ENCODE measurements at regions of chr13 and their contacts with region 1.

Region 1: GRCh38 chr13:24727731-24728601 is 36.0 kb upstream of the RNF17 start:
- DNase-seq: peak in 1 of 2 donors; percentile 49
- ATAC-seq: peak; percentile 89 to 96 (median 94)
- H3K4me3 ChIP-seq: no peak overlapping the region
- H3K27ac ChIP-seq: no peak overlapping the region
- H3K4me1 ChIP-seq: peaks cover 0 to 3% (median 0%) of the 10 kb centered on the region in 9 donors
- H3K27me3 ChIP-seq: peaks cover 0 to 10% (median 0%) of the 10 kb centered on the region in 7 donors
- CTCF ChIP-seq: peak; percentile 44 to 87 (median 76)

Region 2: GRCh38 chr13:24491845-24492244 is 236.1 kb before region 1 on chr13:
- intact Hi-C with region 1: no loop called
- DNase-seq: no peak
- ATAC-seq: peak in 2 of 8 donors; percentile 19 to 24
- H3K4me3 ChIP-seq: no peak overlapping the region
- H3K27ac ChIP-seq: no peak overlapping the region
- H3K4me1 ChIP-seq: peaks cover 0 to 1% (median 0%) of the 10 kb centered on the region in 9 donors
- H3K27me3 ChIP-seq: no peaks in the 10 kb centered on the region
- CTCF ChIP-seq: no peak

Region 3: DNA sequence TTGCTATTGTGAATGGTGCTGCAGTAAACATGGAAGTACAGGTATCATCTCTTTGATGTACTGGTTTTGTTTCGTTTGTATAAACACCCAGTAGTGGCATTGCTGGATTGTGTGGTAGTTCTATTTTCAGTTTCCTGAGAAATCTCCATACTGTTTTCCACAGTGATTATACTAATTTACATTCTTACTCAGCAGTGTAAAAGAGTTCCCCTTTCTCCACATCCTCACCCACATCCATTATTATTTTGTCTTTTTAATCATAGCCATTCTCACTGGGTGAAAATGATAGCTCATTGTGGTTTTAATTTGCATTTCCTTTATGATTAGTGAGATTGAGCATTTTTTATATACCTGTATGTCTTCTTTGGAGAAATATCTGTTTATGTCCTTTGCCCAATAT is 153.1 kb before region 1 on chr13:
- intact Hi-C with region 1: loop called in 2 of 10 experiments (anchors 5 kb)
- DNase-seq: no peak
- ATAC-seq: no peak
- H3K4me3 ChIP-seq: no peak overlapping the region
- H3K27ac ChIP-seq: no peak overlapping the region
- H3K4me1 ChIP-seq: no peaks in the 10 kb centered on the region
- H3K27me3 ChIP-seq: peaks cover 0 to 7% (median 0%) of the 10 kb centered on the region in 7 donors
- CTCF ChIP-seq: no peak

Region 4: DNA sequence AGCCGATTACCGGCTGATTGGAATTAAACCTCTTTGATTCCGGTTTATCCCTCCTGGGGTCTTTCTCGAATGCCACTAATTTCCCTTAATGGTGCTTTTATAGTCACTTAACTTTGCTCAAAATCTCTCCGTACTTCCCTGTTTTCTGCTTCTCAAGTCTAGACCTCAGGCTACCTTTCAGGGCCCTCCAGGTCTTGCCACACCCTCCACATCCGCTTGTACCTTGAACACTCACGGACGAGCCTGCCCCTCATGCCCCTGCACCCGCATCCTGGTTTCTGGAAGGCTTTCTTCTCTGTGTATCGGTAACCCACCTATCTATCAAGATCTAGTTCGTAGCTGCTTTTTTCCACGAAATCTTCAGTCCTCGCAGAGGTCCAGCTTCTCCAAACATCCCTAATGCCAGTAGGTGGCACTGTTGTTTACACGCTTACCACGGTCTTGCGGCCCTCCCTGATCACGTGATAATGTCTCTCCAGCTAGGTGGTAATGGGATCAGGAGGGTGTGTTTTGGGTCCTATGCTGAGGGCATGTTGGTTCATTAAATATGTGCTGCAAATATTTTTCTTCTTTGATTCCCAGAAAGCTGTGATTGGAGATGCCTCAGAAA is 34.0 kb before region 1 on chr13:
- intact Hi-C with region 1: loop called in 7 of 10 experiments (anchors 2 to 10 kb)
- DNase-seq: peak in 1 of 2 donors; percentile 38
- ATAC-seq: peak in 6 of 8 donors; percentile 68 to 78 (median 73)
- H3K4me3 ChIP-seq: no peak overlapping the region
- H3K27ac ChIP-seq: no peak overlapping the region
- H3K4me1 ChIP-seq: no peaks in the 10 kb centered on the region
- H3K27me3 ChIP-seq: peaks cover 0 to 40% (median 26%) of the 10 kb centered on the region in 7 donors
- CTCF ChIP-seq: peak; percentile 36 to 74 (median 73)

Measured in heart right ventricle (tissue), 16 donors.